Activated CD4-positive, alpha-beta T cell treated with anti-CD3 and anti-CD28 coated beads for 36 hours (primary cell): ENCODE measurements at regions of chr9 and their contacts with region 1.

Region 1: GRCh38 chr9:106648799-106649198 is 214.2 kb upstream of the ZNF462 start:
- DNase-seq: no peak
- ATAC-seq: no peak
- H3K4me3 Mint-ChIP-seq: no peak overlapping the region
- H3K27ac Mint-ChIP-seq: no peak overlapping the region
- H3K4me1 Mint-ChIP-seq: no peaks in the 10 kb centered on the region
- H3K27me3 Mint-ChIP-seq: no peaks in the 10 kb centered on the region

Region 2: GRCh38 chr9:106557996-106558667 is 90.7 kb before region 1 on chr9:
- CTCF ChIA-PET with region 1: no interaction called
- POLR2A ChIA-PET with region 1: no interaction called
- intact Hi-C with region 1: loop called in 1 of 2 experiments (anchors 10 kb)
- DNase-seq: no peak
- ATAC-seq: no peak
- H3K4me3 Mint-ChIP-seq: no peak overlapping the region
- H3K27ac Mint-ChIP-seq: no peak overlapping the region
- H3K4me1 Mint-ChIP-seq: no peaks in the 10 kb centered on the region
- H3K27me3 Mint-ChIP-seq: no peaks in the 10 kb centered on the region

Region 3: GRCh38 chr9:106590759-106591505 is 57.9 kb before region 1 on chr9:
- CTCF ChIA-PET with region 1: no interaction called
- POLR2A ChIA-PET with region 1: no interaction called
- intact Hi-C with region 1: loop called in 1 of 2 experiments (anchors 10 kb)
- DNase-seq: no peak
- ATAC-seq: no peak
- H3K4me3 Mint-ChIP-seq: no peak overlapping the region
- H3K27ac Mint-ChIP-seq: no peak overlapping the region
- H3K4me1 Mint-ChIP-seq: no peaks in the 10 kb centered on the region
- H3K27me3 Mint-ChIP-seq: no peaks in the 10 kb centered on the region